ENCODE measurements at regions of chr19 and their contacts with region 1.

Region 1: GRCh38 chr19:38942471-38943181 is 11.9 kb downstream of the MRPS12 start:
- DNase-seq: no peak
- H3K4me3 ChIP-seq: no peak overlapping the region
- H3K27ac ChIP-seq: no peak overlapping the region
- H3K4me1 ChIP-seq: no peaks in the 10 kb centered on the region
- H3K27me3 ChIP-seq: no peaks in the 10 kb centered on the region
- CTCF ChIP-seq: no peak

Region 2: GRCh38 chr19:38597075-38597474 is 345.6 kb before region 1 on chr19:
- CTCF ChIA-PET with region 1: no interaction called
- POLR2A ChIA-PET with region 1: no interaction called
- intact Hi-C with region 1: no loop called
- DNase-seq: no peak
- H3K4me3 ChIP-seq: no peak overlapping the region
- H3K27ac ChIP-seq: no peak overlapping the region
- H3K4me1 ChIP-seq: 0 out of 2 replicates have a peak, but pooled peaks cover 3% of the 10 kb centered on the region
- H3K27me3 ChIP-seq: no peaks in the 10 kb centered on the region
- CTCF ChIP-seq: no peak

Region 3: GRCh38 chr19:38792250-38793111 is 150.1 kb before region 1 on chr19:
- CTCF ChIA-PET with region 1: no interaction called
- POLR2A ChIA-PET with region 1: no interaction called
- intact Hi-C with region 1: no loop called
- DNase-seq: no peak
- H3K4me3 ChIP-seq: no peak overlapping the region
- H3K27ac ChIP-seq: peak overlapping the region; percentile 38; the same call in 1 of the 2 replicates
- H3K4me1 ChIP-seq: peaks cover 12% of the 10 kb centered on the region; the same call in 1 of the 2 replicates
- H3K27me3 ChIP-seq: no peaks in the 10 kb centered on the region
- CTCF ChIP-seq: no peak

Region 4: DNA sequence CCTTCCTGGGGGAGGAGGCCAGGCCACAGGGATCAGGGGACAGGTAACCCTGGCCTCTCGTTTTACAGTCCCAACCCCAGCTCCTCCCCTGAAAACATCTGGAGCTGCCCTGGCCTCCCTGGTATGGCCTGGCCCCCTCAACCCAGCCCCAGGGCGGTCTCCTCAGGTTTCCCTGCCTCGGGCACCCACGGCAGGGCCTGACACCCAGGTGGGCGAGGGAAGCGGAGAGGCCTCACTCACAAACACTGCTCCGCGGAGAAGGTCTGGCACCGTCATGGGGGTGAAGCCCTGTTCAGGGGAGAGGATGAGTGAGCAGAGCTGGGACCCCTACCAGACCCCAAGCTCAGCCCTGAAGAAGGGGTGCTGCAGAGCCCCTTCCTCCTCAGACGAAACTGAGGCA is 24.1 kb before region 1 on chr19:
- CTCF ChIA-PET with region 1: interaction called, 10 read pairs
- POLR2A ChIA-PET with region 1: no interaction called
- intact Hi-C with region 1: no loop called
- DNase-seq: no peak
- H3K4me3 ChIP-seq: no peak overlapping the region
- H3K27ac ChIP-seq: no peak overlapping the region
- H3K4me1 ChIP-seq: no peaks in the 10 kb centered on the region
- H3K27me3 ChIP-seq: no peaks in the 10 kb centered on the region
- CTCF ChIP-seq: no peak

Region 5: GRCh38 chr19:39104186-39104596 is 161.6 kb after region 1 on chr19:
- CTCF ChIA-PET with region 1: no interaction called
- POLR2A ChIA-PET with region 1: no interaction called
- intact Hi-C with region 1: no loop called
- DNase-seq: no peak
- H3K4me3 ChIP-seq: no peak overlapping the region
- H3K27ac ChIP-seq: no peak overlapping the region
- H3K4me1 ChIP-seq: no peaks in the 10 kb centered on the region
- H3K27me3 ChIP-seq: no peaks in the 10 kb centered on the region
- CTCF ChIP-seq: no peak

Measured in PC-9 (cell line).